Calu3 (cell line): ENCODE measurements at regions of chr5 and their contacts with region 1.

Region 1: DNA sequence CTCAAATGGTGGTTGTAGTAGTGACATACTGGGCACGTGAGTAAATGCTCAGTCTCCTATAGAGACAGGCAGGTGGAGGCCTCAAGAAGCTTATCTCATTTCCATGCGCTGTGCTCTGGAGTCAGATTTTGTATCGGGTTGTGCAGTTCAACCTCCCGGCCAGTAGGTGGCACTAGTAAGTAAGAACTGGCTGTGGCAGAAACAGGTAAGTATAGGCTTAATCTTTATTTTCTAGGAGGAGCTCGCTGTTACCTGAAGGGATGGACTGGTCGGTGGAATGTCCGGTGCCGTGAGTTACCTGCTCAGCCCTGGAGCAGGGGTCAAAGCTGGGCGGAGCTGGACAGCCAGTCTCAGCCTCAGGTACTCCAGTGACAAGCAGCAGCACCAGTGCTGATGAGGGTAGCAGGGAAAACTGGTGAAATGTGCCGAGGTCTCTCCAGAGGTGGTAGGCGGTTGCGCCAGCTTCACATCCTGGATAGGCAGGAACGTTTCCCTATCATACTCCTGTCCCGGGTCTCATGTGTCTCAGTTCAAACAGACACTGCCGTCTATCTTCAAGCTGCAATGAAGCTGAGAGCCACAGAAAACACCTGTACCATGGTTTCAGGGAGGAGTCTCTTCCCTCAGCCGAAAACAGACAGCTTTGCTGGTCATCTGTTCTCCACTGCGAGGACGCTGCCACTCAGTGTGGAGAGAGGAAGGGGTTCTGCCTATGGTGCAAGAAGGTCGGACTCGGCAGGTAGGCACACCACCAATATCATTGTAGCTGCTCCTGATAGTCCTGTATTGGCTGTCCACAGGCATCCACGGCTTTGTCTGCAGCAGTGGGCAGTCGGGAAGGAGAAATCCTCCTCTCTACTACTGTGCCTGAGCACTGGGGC is 880.3 kb upstream of the SEMA6A start:
- DNase-seq: peak; percentile 87
- H3K4me3 Mint-ChIP-seq: peak overlapping the region; percentile 79
- H3K27ac Mint-ChIP-seq: peak overlapping the region; percentile 75
- H3K4me1 Mint-ChIP-seq: peaks cover 9% of the 10 kb centered on the region
- H3K27me3 Mint-ChIP-seq: no peaks in the 10 kb centered on the region
- CTCF ChIP-seq: peak; percentile 90

Region 2: DNA sequence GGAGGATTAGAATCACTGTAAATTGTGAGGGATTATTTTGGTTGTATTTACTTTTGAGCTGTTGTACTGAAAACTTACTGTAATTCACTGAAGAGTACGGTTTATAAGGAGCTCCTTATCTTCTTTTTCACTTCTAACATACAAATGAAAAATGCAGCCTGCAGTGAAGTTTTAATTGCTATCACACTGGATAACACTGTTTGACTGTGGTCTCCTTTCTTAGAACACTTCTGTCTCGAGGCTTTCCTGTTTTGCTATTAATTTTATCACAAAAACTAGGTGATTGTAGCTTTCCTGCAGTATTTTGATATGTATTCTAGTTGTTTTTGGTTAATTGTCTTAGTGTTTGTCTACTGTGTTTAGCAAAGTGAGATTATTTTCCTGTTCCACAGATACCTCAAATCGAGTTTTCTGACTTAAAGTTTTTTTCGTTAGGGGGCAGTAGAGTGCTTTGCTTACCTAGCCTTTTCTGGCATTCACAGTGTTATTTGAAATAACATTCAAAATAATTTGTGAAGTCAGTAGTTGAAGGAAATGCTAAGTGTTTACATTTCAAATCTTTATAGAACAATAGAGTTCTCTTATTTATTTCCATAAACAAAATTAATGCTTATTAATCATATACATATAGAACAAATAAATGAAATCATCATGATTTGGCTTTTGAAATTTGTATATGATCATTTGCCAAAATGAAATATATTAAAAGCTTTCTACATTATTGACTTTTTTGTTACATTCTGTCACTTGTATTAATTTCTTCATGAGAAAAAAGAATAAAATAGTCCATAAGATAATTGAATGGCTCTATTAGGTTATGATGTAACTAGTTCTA is 1317.2 kb before region 1 on chr5:
- CTCF ChIA-PET with region 1: no interaction called
- intact Hi-C with region 1: loop called (anchors 10 kb)
- DNase-seq: peak; percentile 36
- H3K4me3 Mint-ChIP-seq: no peak overlapping the region
- H3K27ac Mint-ChIP-seq: no peak overlapping the region
- H3K4me1 Mint-ChIP-seq: no peaks in the 10 kb centered on the region
- H3K27me3 Mint-ChIP-seq: no peaks in the 10 kb centered on the region
- CTCF ChIP-seq: peak; percentile 70

Region 3: DNA sequence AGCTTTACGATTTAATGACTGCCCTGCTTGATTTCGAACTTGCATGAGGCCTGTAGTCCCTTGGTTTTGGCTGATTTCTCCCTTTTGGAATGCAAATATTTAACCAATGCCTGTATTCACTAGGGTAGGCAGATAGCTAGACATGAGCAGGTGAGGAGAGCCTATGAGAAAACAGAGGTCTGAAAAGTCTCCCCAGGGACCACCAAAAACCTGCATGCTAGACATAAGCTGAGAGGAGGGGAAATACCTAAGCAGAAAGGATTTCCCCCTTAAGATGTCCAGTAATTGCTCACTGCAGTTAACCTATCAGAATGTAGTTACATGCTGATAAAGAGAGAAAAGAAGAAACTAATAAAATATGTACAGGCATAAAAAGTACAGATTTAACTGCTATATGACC is 212.9 kb before region 1 on chr5:
- CTCF ChIA-PET with region 1: no interaction called
- intact Hi-C with region 1: no loop called
- DNase-seq: no peak
- H3K4me3 Mint-ChIP-seq: no peak overlapping the region
- H3K27ac Mint-ChIP-seq: no peak overlapping the region
- H3K4me1 Mint-ChIP-seq: no peaks in the 10 kb centered on the region
- H3K27me3 Mint-ChIP-seq: no peaks in the 10 kb centered on the region
- CTCF ChIP-seq: no peak

Region 4: GRCh38 chr5:117547192-117547591 is 92.2 kb after region 1 on chr5:
- CTCF ChIA-PET with region 1: interaction called, 10 read pairs
- intact Hi-C with region 1: no loop called
- DNase-seq: no peak
- H3K4me3 Mint-ChIP-seq: no peak overlapping the region
- H3K27ac Mint-ChIP-seq: peak overlapping the region; percentile 46
- H3K4me1 Mint-ChIP-seq: peaks cover 54% of the 10 kb centered on the region
- H3K27me3 Mint-ChIP-seq: no peaks in the 10 kb centered on the region
- CTCF ChIP-seq: no peak

Region 5: GRCh38 chr5:117652036-117652957 is 197.3 kb after region 1 on chr5:
- CTCF ChIA-PET with region 1: interaction called, 3 read pairs
- intact Hi-C with region 1: loop called (anchors 5 kb)
- DNase-seq: no peak
- H3K4me3 Mint-ChIP-seq: no peak overlapping the region
- H3K27ac Mint-ChIP-seq: no peak overlapping the region
- H3K4me1 Mint-ChIP-seq: peaks cover 9% of the 10 kb centered on the region
- H3K27me3 Mint-ChIP-seq: no peaks in the 10 kb centered on the region
- CTCF ChIP-seq: no peak

Region 6: DNA sequence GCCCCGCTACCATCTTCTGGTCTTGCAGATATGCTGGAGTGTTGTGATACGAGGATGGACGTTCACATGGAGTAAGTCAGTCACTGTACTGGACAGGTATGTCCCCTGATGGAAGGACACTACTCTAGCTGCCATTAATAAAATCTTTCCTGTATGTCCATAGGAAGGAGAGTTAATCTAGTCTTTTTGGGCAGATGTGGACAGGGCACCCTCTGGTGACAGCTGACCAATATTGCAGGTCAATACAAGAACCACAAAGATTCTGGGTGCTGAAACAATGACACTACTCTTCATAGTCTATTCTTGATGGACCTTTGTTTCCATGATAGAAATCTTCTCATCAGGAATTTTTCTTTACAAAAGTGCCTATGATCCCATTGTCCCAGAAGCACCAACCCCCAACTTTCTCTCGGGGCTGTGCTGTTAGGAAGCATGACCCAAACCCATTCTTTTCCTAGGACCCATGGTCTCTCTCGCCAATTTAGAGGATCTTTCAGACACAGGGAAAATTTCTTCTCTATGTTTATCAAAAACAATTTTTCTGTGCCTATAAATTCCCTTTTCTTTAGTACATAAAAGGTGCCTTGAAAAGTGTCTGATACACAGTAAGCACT is 1156.5 kb after region 1 on chr5:
- CTCF ChIA-PET with region 1: interaction called, 12 read pairs
- intact Hi-C with region 1: loop called (anchors 5 kb)
- DNase-seq: peak; percentile 34
- H3K4me3 Mint-ChIP-seq: no peak overlapping the region
- H3K27ac Mint-ChIP-seq: no peak overlapping the region
- H3K4me1 Mint-ChIP-seq: no peaks in the 10 kb centered on the region
- H3K27me3 Mint-ChIP-seq: no peaks in the 10 kb centered on the region
- CTCF ChIP-seq: peak; percentile 37

Region 7: GRCh38 chr5:118956727-118957126 is 1501.8 kb after region 1 on chr5:
- CTCF ChIA-PET with region 1: interaction called, 3 read pairs
- intact Hi-C with region 1: loop called (anchors 10 kb)
- DNase-seq: no peak
- H3K4me3 Mint-ChIP-seq: no peak overlapping the region
- H3K27ac Mint-ChIP-seq: no peak overlapping the region
- H3K4me1 Mint-ChIP-seq: no peaks in the 10 kb centered on the region
- H3K27me3 Mint-ChIP-seq: no peaks in the 10 kb centered on the region
- CTCF ChIP-seq: no peak